OCI-LY7 (cell line): ENCODE measurements at regions of chr5 and their contacts with region 1.

Region 1: DNA sequence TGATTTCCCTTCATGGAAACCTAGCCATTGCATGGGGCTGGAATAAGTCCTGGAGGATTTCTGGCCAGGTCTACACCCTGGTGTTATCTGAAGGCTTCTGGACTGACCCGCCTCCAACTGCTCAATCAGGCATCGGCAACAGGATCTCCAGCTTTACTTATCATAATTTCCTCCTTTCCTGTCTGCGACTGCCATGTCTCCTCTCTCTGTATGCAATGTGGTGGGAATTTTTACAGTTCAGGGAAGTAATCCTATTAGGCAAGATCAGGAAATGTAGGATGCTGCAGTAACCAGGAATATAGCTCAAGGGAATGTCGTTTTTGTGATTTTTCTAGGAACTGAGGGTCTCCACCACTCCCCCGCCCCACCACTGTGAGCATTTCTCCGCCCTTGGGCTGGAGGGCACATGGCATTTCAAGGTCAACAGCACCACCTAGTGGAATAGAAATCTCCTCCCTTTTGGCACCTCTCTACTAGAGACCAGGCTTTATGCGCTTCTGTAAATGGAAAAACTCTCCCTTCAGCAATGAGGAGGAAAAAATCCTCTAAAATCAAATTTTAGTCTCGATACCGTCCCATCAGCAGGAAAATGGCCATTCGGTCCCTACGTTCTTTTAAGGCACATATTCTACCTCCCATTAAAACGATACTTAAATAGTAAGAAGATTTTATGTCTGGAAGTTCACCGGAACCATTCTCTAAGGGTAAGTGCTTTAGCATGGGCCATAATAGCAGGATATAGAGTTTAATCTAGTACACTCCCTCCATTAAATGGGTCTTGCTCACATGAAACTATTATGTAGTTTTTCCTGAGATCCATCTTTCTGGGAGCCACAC is 93.0 kb downstream of the YTHDC2 start:
- DNase-seq: peak; percentile 74
- H3K4me3 ChIP-seq: no peak overlapping the region
- H3K27ac ChIP-seq: no peak overlapping the region
- H3K4me1 ChIP-seq: no peaks in the 10 kb centered on the region
- CTCF ChIP-seq: peak; percentile 89

Region 2: GRCh38 chr5:112551419-112552032 is 1055.0 kb before region 1 on chr5:
- CTCF ChIA-PET with region 1: no interaction called
- POLR2A ChIA-PET with region 1: no interaction called
- intact Hi-C with region 1: loop called (anchors 10 kb)
- DNase-seq: peak; percentile 75
- H3K4me3 ChIP-seq: no peak overlapping the region
- H3K27ac ChIP-seq: no peak overlapping the region
- H3K4me1 ChIP-seq: no peaks in the 10 kb centered on the region
- CTCF ChIP-seq: peak; percentile 96

Region 3: GRCh38 chr5:113043491-113043931 is 563.0 kb before region 1 on chr5:
- CTCF ChIA-PET with region 1: no interaction called
- POLR2A ChIA-PET with region 1: no interaction called
- intact Hi-C with region 1: loop called (anchors 1 kb)
- DNase-seq: peak; percentile 37
- H3K4me3 ChIP-seq: no peak overlapping the region
- H3K27ac ChIP-seq: no peak overlapping the region
- H3K4me1 ChIP-seq: peaks cover 18% of the 10 kb centered on the region
- CTCF ChIP-seq: peak; percentile 67

Region 4: GRCh38 chr5:113378959-113379541 is 227.5 kb before region 1 on chr5:
- CTCF ChIA-PET with region 1: interaction called, 4 read pairs
- POLR2A ChIA-PET with region 1: interaction called, 5 read pairs
- intact Hi-C with region 1: loop called (anchors 1 kb)
- DNase-seq: peak; percentile 65
- H3K4me3 ChIP-seq: no peak overlapping the region
- H3K27ac ChIP-seq: no peak overlapping the region
- H3K4me1 ChIP-seq: no peaks in the 10 kb centered on the region
- CTCF ChIP-seq: peak; percentile 93

Region 5: DNA sequence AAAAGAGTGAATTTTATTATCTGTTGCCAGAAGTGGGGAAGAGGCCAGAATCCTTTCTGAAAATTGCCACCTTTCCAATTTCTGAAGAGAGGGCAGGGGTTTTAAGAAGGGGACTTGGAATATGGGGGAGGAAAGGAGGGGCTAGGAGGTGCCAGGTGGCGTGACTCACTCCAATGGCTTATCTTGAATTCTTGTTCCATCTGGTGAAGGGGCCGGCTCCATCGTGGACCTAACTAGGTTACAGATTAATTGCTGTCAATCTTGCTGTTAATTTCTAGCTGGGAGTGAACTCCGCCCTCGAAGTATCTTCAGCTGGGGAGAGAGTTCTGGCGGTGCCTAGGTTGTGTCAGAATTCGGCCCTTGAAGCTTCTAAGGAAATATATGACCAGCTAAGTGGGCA is 45.6 kb after region 1 on chr5:
- CTCF ChIA-PET with region 1: no interaction called
- POLR2A ChIA-PET with region 1: no interaction called
- intact Hi-C with region 1: no loop called
- DNase-seq: no peak
- H3K4me3 ChIP-seq: no peak overlapping the region
- H3K27ac ChIP-seq: no peak overlapping the region
- H3K4me1 ChIP-seq: no peaks in the 10 kb centered on the region
- CTCF ChIP-seq: no peak

Region 6: GRCh38 chr5:113678924-113679575 is 72.5 kb after region 1 on chr5:
- CTCF ChIA-PET with region 1: interaction called, 14 read pairs
- POLR2A ChIA-PET with region 1: no interaction called
- intact Hi-C with region 1: no loop called
- DNase-seq: peak; percentile 46
- H3K4me3 ChIP-seq: no peak overlapping the region
- H3K27ac ChIP-seq: no peak overlapping the region
- H3K4me1 ChIP-seq: no peaks in the 10 kb centered on the region
- CTCF ChIP-seq: peak; percentile 84

Region 7: DNA sequence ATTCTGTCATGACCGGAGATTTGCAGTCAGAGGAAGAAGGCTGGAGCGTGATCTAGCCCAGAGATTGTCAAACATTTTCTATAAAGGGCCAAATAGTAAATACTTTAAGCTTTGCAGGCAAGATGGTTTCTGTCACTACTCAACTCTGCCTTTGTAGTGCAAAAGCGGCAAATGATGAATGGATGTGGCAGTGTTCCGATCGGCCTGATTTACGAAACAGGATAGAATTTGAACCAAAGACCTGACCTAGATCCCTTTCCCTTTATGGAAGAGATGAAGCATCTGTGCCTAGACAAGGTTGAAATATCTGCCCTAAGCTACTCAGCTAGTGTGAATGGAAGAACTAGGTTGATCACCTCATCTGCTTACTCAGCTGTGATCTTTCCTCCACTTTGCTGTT is 116.5 kb after region 1 on chr5:
- CTCF ChIA-PET with region 1: no interaction called
- POLR2A ChIA-PET with region 1: no interaction called
- intact Hi-C with region 1: no loop called
- DNase-seq: no peak
- H3K4me3 ChIP-seq: no peak overlapping the region
- H3K27ac ChIP-seq: no peak overlapping the region
- H3K4me1 ChIP-seq: no peaks in the 10 kb centered on the region
- CTCF ChIP-seq: no peak